Activated T-helper 1 cell treated with anti-CD3 and anti-CD28 coated beads, Interleukin-12 subunit alpha, Interleukin-12 subunit beta, Interleukin-2, Interleukin-4 antibody, amounts not matched to agents 30 ng/mL and 10 ng/mL and 1 ng/mL, durations not matched to agents 14 hours and 24 hours and 36 hours (primary cell): ENCODE measurements at regions of chr7 and their contacts with region 1.

Region 1: GRCh38 chr7:45035893-45036292 is 35.9 kb downstream of the CCM2 start:
- DNase-seq: no peak
- H3K4me3 Mint-ChIP-seq: peak overlapping the region; percentile 71
- H3K27ac Mint-ChIP-seq: peak overlapping the region; percentile 88
- H3K4me1 Mint-ChIP-seq: peaks cover 64% of the 10 kb centered on the region
- H3K27me3 Mint-ChIP-seq: no peaks in the 10 kb centered on the region

Region 2: DNA sequence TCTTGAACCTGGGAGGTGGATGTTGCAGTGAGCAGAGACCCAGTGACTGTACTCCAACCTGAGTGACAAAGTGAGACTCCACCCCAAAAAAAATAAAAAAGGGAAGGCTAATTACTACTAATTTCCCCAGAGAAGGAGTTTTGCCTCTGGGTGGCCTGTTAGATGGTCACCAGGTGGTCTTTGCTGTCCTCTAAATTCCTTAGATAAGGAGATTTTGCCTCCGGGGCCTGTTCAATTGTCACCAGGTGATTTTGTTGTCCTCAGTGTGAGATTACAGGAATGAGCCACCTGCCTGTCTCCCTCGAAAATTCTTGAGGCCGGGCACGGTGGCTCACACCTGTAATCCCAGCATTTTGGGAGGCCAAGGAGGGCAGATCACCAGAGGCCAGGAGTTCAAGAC is 311.6 kb before region 1 on chr7:
- intact Hi-C with region 1: no loop called
- DNase-seq: no peak
- H3K4me3 Mint-ChIP-seq: no peak overlapping the region
- H3K27ac Mint-ChIP-seq: no peak overlapping the region
- H3K4me1 Mint-ChIP-seq: peaks cover 5% of the 10 kb centered on the region
- H3K27me3 Mint-ChIP-seq: no peaks in the 10 kb centered on the region

Region 3: DNA sequence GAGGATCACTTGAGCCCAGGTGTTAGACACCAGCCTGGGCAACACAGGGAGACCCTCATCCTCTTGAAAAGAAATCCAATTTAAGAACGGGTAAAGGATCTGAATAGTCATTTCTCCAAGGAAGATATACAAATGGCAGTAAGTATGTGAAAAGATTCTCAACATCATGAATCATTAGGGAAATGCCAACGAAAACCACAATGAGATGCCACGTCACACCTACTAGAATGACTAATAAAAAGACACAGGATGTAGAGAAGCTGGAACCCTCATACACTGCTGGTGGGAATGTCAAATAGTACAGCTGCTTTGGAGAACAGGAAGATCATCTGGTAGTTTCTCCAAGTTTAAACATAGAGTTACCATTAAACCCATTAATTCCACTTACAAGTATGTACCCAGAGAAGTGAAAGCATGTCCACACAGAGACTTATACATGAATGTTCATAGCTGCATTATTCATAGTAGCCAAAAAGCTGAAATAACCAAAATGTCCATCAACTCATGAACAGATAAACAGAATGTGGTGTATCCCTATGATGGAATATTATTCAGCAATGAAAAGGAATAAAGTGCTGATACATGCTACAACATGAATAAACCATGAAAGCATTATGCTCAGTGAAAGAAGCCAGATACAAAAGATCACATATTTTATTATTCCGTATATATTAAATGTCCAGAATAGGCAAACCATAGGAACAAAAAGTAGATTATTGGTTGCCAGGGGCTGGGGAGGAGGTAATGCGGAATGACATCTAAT is 300.3 kb before region 1 on chr7:
- intact Hi-C with region 1: no loop called
- DNase-seq: peak; percentile 42
- H3K4me3 Mint-ChIP-seq: peak overlapping the region; percentile 50
- H3K27ac Mint-ChIP-seq: peak overlapping the region; percentile 89
- H3K4me1 Mint-ChIP-seq: peaks cover 29% of the 10 kb centered on the region
- H3K27me3 Mint-ChIP-seq: peaks cover 2% of the 10 kb centered on the region

Region 4: DNA sequence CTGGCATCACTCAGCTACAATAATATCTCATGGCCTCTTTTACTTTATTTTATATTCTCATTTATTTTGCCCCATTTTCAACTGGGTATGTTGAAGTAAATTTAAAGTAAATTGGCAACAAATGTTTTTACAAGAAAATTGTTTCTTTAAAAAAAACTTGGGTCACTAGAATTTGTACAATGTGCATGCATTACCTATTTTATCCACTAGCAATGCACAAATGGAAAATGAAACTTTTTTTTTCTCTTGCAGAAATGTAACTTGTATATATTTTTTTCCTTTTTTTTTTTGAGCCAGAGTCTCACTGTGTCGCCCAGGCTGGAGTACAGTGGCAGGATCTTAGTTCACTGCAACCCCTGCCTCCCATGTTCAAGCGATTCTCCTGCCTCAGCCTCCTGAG is 177.7 kb before region 1 on chr7:
- intact Hi-C with region 1: no loop called
- DNase-seq: no peak
- H3K4me3 Mint-ChIP-seq: no peak overlapping the region
- H3K27ac Mint-ChIP-seq: no peak overlapping the region
- H3K4me1 Mint-ChIP-seq: peaks cover 17% of the 10 kb centered on the region
- H3K27me3 Mint-ChIP-seq: peaks cover 2% of the 10 kb centered on the region

Region 5: DNA sequence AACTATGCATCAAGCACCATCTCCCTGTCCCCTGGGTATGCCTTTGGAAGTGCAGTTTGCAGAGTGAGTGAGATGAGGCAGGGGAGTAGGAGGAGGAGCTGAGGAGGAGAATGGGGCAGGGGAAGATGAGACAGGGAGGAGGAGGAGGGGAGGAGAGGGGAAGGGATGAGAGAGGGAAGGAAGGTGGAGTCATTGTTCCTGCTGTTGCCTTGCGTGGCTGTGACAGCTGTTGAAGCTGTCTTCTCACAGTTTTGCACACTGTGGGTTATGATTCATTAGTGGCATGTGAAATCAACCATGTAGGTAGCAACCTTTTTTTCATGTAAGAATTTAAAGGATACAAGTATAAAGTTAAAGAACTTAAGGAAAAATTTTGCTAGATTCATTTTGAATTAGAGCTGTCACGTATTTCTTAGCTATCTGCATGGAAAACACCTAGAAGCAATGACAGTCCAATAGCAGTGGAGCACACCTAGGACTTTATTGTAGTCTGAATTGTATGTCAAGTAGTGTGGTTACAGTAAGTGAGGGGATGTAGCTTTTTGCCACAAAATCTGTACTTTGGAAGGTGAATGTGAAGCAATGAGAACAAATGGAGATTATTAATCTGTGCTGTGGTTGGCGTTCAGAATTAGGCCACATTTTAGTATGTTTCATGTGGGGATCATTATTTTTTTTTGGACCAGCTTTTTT is 14.1 kb before region 1 on chr7:
- intact Hi-C with region 1: loop called (anchors 2 kb)
- DNase-seq: no peak
- H3K4me3 Mint-ChIP-seq: peak overlapping the region; percentile 21
- H3K27ac Mint-ChIP-seq: peak overlapping the region; percentile 89
- H3K4me1 Mint-ChIP-seq: peaks cover 55% of the 10 kb centered on the region
- H3K27me3 Mint-ChIP-seq: no peaks in the 10 kb centered on the region

Region 6: DNA sequence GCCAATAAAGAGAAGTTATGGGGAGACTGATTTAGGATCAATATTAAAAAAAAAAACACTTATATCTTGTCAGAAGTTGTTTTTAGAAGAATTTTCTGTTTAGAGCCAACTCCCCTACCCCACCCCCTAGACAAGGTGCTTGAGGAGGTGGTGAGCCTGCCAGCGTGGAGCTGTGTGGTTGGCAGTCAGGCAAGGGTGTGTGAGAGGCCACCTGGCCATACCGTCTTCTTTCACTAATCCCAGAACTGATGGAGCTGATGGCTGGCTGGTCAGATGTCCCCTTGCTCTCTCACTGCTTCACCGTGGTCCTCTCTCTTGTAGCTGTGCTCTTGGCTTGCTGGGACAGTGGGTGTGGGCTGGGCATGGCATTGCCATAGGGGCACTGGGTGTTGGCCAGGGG is 18.5 kb after region 1 on chr7:
- intact Hi-C with region 1: loop called (anchors 2 kb)
- DNase-seq: no peak
- H3K4me3 Mint-ChIP-seq: no peak overlapping the region
- H3K27ac Mint-ChIP-seq: peak overlapping the region; percentile 59
- H3K4me1 Mint-ChIP-seq: peaks cover 50% of the 10 kb centered on the region
- H3K27me3 Mint-ChIP-seq: no peaks in the 10 kb centered on the region